Naive thymus-derived CD4-positive, alpha-beta T cell (primary cell): ENCODE measurements at regions of chr16 and their contacts with region 1.

Region 1: DNA sequence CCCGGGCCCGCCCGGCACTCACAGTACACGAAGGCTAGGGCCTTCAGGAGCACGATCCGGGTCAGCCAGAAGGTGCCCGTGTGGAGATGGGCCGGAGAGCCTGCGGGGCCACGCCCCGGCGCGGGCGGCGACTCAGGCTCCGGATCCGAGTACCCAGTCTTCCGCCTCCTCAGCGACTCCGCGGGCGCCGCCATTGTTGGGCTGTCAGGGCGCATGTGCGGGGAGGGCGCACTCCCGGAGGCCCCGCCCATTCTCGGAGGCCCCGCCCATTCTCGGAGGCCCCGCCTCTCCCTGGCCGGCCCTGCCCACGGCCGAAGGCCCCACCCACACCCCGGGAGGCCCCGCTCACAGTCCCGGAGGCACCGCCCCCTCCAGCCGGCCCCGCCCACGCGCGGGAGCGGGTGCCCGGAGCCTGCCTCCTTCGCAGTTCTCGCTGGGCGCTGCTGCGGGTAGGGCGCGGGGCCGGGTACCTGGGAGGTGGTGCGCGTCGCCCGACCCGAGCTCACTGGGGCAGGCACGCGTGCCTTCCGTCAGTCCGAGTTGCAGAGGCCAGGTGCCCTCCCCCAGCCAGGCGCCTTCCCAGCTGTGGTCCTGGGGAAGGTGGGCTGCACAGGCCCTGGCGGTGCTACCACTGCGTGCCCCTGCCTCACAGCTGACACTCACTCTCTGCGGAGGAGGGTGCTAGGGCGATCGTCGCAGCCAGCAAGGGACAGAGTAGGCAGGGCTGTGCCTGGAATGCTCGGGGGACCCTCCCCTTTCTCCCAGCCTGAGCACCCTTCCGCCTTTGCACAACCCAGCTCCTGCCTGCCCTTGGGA is at the start of gene LMF1:
- DNase-seq: peak; percentile 92 to 100 (median 96)
- ATAC-seq: peak; percentile 100
- H3K4me3 ChIP-seq: peak within 1 kb of the TSS; percentile 79
- H3K4me3 Mint-ChIP-seq: peak within 1 kb of the TSS; percentile 67 to 88 (median 76)
- H3K27ac ChIP-seq: peak within 1 kb of the TSS; percentile 82
- H3K27ac Mint-ChIP-seq: peak within 1 kb of the TSS in 8 of 9 donors; percentile 58 to 90 (median 78)
- H3K4me1 ChIP-seq: peaks cover 6 to 19% of the 10 kb centered on the region in 2 donors
- H3K4me1 Mint-ChIP-seq: peaks cover 12 to 40% (median 29%) of the 10 kb centered on the region in 7 donors
- H3K27me3 ChIP-seq: no peaks in the 10 kb centered on the region
- H3K27me3 Mint-ChIP-seq: peaks cover 0 to 7% (median 0%) of the 10 kb centered on the region in 5 donors
- total RNA-seq, gene LMF1: 25.9 to 63.1 (median 43.1) TPM

Region 2: DNA sequence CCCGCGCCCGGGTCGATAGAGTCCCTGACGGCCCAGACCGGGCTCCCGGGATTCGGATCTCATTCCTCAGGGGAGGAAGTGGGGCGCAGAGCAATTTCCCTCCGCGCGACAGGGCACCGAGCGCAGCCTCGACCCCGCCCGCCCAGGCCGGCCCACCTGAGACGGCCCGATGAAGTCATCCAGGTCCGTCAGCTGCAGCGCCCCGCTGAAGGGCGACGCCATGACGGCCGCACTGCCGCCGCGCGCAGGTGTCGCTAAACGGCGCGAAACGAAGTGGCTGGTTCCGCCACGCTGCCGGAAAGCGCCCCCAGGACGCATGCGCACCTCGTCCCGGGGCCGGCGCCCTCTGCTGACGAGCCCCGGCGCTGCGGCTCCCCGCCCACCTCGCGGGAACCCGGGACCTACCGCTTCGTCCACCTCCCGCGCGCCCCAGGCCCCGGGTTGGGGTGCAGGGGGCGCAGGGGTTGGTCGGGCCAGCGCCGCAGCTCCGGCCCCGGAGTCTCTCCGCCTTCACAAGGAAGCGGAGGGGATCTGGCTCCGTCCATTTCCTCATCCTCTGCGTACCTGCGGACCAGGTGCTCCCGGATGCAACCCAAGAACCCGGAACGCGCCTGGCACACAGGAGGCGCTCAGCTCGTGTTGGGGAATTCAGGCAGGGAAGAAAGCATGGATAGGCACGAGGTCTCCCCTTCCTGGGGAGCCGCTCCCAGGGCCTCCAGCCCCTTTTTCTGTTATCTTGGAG is 230.0 kb before region 1 on chr16 and contains the start of gene CIAO3:
- CTCF ChIA-PET with region 1: no interaction called
- POLR2A ChIA-PET with region 1: no interaction called
- intact Hi-C with region 1: loop called in 1 of 2 experiments (anchors 2 kb)
- DNase-seq: peak; percentile 85 to 99 (median 91)
- ATAC-seq: peak; percentile 93
- H3K4me3 ChIP-seq: peak within 1 kb of the TSS; percentile 81
- H3K4me3 Mint-ChIP-seq: peak within 1 kb of the TSS; percentile 63 to 85 (median 80)
- H3K27ac ChIP-seq: peak within 1 kb of the TSS; percentile 86
- H3K27ac Mint-ChIP-seq: peak within 1 kb of the TSS in 7 of 9 donors; percentile 26 to 81 (median 77)
- H3K4me1 ChIP-seq: peaks cover 4 to 10% of the 10 kb centered on the region in 2 donors
- H3K4me1 Mint-ChIP-seq: peaks cover 0 to 16% (median 5%) of the 10 kb centered on the region in 7 donors
- H3K27me3 ChIP-seq: no peaks in the 10 kb centered on the region
- H3K27me3 Mint-ChIP-seq: no peaks in the 10 kb centered on the region
- total RNA-seq, gene CIAO3: 39.0 to 55.5 (median 46.1) TPM

Region 3: DNA sequence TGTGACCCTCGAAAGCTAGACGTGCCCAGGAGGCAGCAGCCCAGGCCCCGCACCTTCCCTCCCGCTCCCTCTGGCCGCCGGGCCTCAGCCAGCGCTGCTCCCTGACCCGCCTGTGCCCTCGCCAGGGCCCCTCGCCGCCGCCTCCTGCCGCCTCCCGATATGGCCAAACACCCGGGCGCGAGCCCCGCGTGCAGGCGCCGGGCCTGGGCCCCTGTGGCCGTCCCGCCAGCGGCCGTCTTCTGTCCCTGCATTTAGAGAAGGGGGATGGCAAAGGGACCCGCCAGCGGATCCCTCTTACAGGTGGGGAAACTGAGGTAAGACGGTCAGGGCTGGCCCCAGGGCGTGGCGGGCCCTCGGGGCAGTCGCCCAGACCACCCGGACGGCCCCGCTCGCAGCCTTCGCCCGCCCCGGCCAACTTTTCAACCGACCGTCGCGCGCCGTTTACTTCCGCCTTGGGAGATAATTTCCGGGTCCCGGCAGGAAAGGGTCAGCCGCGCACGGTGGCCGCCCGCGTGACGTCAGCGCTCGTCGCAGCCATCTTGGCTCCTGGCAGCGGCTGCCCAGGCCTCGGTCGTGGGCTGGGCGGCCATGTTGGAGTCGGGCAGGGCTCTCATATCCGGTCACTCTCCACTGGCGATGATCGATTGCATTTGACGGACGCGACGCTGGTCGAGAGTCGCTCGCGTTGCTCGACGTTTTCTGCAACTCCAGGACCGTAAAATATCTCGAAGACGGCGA is 163.5 kb before region 1 on chr16:
- CTCF ChIA-PET with region 1: no interaction called
- POLR2A ChIA-PET with region 1: no interaction called
- intact Hi-C with region 1: loop called (anchors 2 kb)
- DNase-seq: peak; percentile 53 to 89 (median 68)
- ATAC-seq: peak; percentile 95
- H3K4me3 ChIP-seq: peak overlapping the region; percentile 92
- H3K4me3 Mint-ChIP-seq: peak overlapping the region; percentile 92 to 100 (median 95)
- H3K27ac ChIP-seq: peak overlapping the region; percentile 88
- H3K27ac Mint-ChIP-seq: peak overlapping the region; percentile 92 to 98 (median 97)
- H3K4me1 ChIP-seq: peaks cover 0 to 9% of the 10 kb centered on the region in 2 donors
- H3K4me1 Mint-ChIP-seq: peaks cover 0 to 16% (median 12%) of the 10 kb centered on the region in 7 donors
- H3K27me3 ChIP-seq: no peaks in the 10 kb centered on the region
- H3K27me3 Mint-ChIP-seq: peaks cover 0 to 15% (median 5%) of the 10 kb centered on the region in 5 donors

Region 4: DNA sequence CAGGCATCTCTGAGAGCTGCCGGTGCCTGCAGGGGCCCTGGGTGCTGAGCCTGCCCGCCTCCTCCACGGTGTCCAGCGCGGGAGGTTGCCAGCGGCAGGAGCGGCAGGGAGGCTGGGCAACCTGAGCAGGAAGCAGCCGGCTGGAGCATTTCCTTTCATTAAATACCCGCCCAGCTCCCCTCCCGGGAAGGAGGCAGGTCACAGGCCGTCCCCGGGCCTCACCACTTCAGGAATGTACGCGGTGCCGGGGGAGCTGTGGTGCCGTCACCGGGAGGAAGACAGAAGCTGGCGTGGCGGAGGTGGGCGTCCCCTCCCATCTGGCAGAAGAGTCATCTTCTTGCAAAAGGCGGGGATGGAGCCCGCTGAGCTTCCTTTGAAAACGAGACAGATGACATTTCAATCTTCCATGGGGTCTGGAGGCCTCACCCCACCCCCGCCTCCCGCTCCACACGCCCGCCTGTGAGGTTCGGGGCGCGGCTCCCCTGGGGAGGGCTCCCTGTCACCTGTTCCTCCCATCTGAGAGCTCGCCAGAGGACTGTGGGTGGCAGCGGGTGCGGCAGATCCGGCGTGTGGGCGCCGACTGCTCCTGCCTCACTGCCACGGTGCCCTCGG is 26.6 kb after region 1 on chr16:
- CTCF ChIA-PET with region 1: interaction called, 3 read pairs
- POLR2A ChIA-PET with region 1: interaction called, 7 read pairs
- intact Hi-C with region 1: loop called in 1 of 2 experiments (anchors 1 kb)
- DNase-seq: peak; percentile 35 to 75 (median 62)
- ATAC-seq: peak; percentile 85
- H3K4me3 ChIP-seq: peak overlapping the region; percentile 75
- H3K4me3 Mint-ChIP-seq: peak overlapping the region; percentile 67 to 91 (median 83)
- H3K27ac ChIP-seq: peak overlapping the region; percentile 86
- H3K27ac Mint-ChIP-seq: peak overlapping the region in 8 of 9 donors; percentile 72 to 98 (median 92)
- H3K4me1 ChIP-seq: peaks cover 21 to 34% of the 10 kb centered on the region in 2 donors
- H3K4me1 Mint-ChIP-seq: peaks cover 17 to 55% (median 47%) of the 10 kb centered on the region in 7 donors
- H3K27me3 ChIP-seq: no peaks in the 10 kb centered on the region
- H3K27me3 Mint-ChIP-seq: peaks cover 0 to 49% (median 0%) of the 10 kb centered on the region in 5 donors

Region 5: GRCh38 chr16:1026057-1026783 is 55.2 kb after region 1 on chr16:
- CTCF ChIA-PET with region 1: no interaction called
- POLR2A ChIA-PET with region 1: no interaction called
- intact Hi-C with region 1: no loop called
- DNase-seq: no peak
- ATAC-seq: no peak
- H3K4me3 ChIP-seq: no peak overlapping the region
- H3K4me3 Mint-ChIP-seq: no peak overlapping the region
- H3K27ac ChIP-seq: no peak overlapping the region
- H3K27ac Mint-ChIP-seq: no peak overlapping the region
- H3K4me1 ChIP-seq: no peaks in the 10 kb centered on the region
- H3K4me1 Mint-ChIP-seq: peaks cover 0 to 3% (median 0%) of the 10 kb centered on the region in 7 donors
- H3K27me3 ChIP-seq: no peaks in the 10 kb centered on the region
- H3K27me3 Mint-ChIP-seq: peaks cover 0 to 15% (median 5%) of the 10 kb centered on the region in 5 donors